ENCODE measurements at regions of chr17 and their contacts with region 1.

Region 1: GRCh38 chr17:76597728-76598474 is 12.2 kb upstream of the ST6GALNAC2 start:
- DNase-seq: peak in 2 of 3 donors; percentile 20 to 23
- H3K4me3 ChIP-seq: no peak overlapping the region
- H3K27ac ChIP-seq: no peak overlapping the region
- H3K4me1 ChIP-seq: peaks cover 7 to 33% (median 11%) of the 10 kb centered on the region in 4 experiments
- H3K27me3 ChIP-seq: no peaks in the 10 kb centered on the region

Region 2: DNA sequence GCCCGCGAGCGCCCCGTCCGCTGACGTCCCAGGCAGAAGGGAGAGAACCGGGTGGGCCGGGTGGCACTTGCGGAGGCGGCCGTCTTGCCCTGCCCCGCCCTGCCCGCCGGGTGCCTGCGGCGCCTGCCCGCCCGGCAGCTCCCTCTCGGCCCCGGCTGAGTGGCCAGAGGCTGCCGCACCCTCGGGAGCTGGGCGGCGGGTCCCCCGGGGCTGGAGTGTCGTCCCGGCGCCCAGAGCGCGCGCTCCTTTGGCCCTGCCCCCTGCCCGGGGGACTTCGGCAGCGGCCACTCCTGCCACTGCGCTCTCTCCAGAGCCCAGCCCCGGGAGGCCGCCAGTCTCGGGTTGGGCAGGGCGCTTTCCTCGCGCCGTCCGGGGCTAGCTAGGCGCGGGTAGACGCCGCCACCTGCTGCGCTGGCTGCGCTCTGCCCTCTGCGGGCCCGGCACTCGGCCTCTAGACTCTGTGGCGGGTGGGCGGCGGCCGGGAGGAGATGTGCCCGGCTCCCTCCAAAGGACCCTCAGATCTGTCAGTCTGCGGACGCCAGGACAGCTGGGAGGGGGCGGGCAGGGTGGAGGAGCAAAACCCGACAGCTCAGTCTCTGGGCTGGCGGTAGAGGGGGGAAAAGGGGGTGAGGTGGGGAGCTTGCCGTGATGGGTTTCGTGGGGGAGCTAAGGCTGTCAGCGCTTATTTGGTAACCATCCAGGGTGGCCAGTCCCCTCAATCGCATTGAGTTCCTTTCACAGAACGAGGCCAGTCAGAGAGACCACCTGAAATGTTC is 11.9 kb before region 1 on chr17 and contains the start of gene ST6GALNAC2:
- CTCF ChIA-PET with region 1: interaction called, 13 read pairs
- POLR2A ChIA-PET with region 1: no interaction called
- DNase-seq: peak; percentile 53 to 75 (median 66)
- H3K4me3 ChIP-seq: peak within 1 kb of the TSS; percentile 42 to 78 (median 60)
- H3K27ac ChIP-seq: no peak within 1 kb of the TSS
- H3K4me1 ChIP-seq: peaks cover 0 to 26% (median 19%) of the 10 kb centered on the region in 4 experiments
- H3K27me3 ChIP-seq: peaks cover 13 to 57% (median 27%) of the 10 kb centered on the region in 5 experiments

Measured in common myeloid progenitor, CD34-positive (primary cell).